Naive thymus-derived CD4-positive, alpha-beta T cell (primary cell): ENCODE measurements at regions of chr11 and their contacts with region 1.

Region 1: DNA sequence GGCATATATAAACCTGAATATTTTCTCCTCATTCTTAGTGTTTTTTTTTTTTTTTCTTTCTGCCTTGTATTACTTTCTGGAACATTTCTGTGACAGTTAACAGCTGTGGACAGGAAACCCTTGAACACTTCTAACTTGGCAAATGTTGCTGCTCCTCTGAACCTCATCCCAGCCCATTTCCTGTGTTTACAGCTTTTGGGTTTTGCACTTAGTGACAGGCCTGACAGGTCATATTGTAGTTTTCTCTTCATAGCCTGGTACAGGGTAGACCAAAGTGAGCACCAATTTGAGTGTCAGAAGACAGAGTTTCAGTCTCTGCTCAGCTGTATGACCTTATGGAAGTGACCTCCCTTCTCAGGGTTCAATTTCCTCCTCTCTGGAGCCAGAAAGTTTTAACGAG is 91.6 kb downstream of the STIM1 start:
- DNase-seq: peak in 8 of 9 donors; percentile 36 to 86 (median 80)
- ATAC-seq: peak; percentile 88
- H3K4me3 ChIP-seq: peak overlapping the region; percentile 44
- H3K4me3 Mint-ChIP-seq: peak overlapping the region; percentile 52 to 88 (median 80)
- H3K27ac ChIP-seq: peak overlapping the region; percentile 65
- H3K27ac Mint-ChIP-seq: peak overlapping the region; percentile 93 to 99 (median 97)
- H3K4me1 ChIP-seq: peaks cover 93 to 95% of the 10 kb centered on the region in 2 donors
- H3K4me1 Mint-ChIP-seq: peaks cover 84 to 98% (median 97%) of the 10 kb centered on the region in 7 donors
- H3K27me3 ChIP-seq: no peaks in the 10 kb centered on the region
- H3K27me3 Mint-ChIP-seq: no peaks in the 10 kb centered on the region

Region 2: DNA sequence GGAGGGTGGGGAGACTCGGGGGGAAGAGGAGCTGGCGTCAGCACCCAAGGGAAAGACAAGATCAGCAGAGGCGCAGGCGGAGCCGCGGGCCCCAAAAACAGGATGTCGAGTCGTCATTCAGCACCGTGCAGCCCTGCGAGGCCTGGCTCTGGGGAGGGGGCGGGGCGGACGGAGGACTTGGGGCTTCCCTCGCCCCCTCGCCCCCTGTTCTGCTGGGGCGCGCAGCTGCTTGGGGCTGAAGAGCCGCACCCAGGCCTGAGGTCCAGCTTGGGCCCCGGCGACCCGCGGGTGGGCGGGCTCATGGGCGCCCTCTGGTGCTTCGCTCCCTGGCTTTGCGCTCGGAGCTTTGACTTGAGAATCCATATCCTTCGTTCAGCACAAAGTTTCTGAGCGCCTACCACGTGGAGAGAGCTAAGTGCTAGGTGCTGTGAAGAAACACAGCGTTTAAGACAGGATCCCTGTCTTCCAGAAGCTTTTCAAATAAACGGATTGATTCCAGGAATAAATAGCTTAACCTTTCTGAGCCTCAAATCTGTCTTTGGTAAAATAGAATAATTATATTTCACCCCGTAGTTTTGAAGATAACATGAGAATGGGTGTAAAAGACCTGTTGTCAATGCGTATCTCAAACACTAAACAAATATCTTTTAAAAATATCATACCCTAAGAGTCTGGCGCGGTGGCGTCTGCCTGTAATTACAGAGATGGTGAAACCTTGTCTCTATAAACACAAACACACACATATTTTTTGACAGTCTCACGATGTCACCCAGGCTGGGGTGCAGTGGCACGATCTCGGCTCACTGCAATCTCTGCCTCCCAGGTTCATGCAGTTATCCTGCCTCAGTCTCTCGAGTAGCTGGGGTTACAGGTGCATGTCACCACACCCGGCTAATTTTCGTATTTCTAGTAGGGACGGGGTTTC is 105.4 kb before region 1 on chr11:
- CTCF ChIA-PET with region 1: no interaction called
- POLR2A ChIA-PET with region 1: interaction called, 18 read pairs
- intact Hi-C with region 1: no loop called
- DNase-seq: peak; percentile 82 to 98 (median 95)
- ATAC-seq: peak; percentile 84
- H3K4me3 ChIP-seq: peak overlapping the region; percentile 51
- H3K4me3 Mint-ChIP-seq: peak overlapping the region; percentile 76 to 99 (median 91)
- H3K27ac ChIP-seq: peak overlapping the region; percentile 95
- H3K27ac Mint-ChIP-seq: peak overlapping the region; percentile 87 to 99 (median 97)
- H3K4me1 ChIP-seq: peaks cover 30 to 34% of the 10 kb centered on the region in 2 donors
- H3K4me1 Mint-ChIP-seq: peaks cover 19 to 64% (median 54%) of the 10 kb centered on the region in 7 donors
- H3K27me3 ChIP-seq: no peaks in the 10 kb centered on the region
- H3K27me3 Mint-ChIP-seq: no peaks in the 10 kb centered on the region

Region 3: DNA sequence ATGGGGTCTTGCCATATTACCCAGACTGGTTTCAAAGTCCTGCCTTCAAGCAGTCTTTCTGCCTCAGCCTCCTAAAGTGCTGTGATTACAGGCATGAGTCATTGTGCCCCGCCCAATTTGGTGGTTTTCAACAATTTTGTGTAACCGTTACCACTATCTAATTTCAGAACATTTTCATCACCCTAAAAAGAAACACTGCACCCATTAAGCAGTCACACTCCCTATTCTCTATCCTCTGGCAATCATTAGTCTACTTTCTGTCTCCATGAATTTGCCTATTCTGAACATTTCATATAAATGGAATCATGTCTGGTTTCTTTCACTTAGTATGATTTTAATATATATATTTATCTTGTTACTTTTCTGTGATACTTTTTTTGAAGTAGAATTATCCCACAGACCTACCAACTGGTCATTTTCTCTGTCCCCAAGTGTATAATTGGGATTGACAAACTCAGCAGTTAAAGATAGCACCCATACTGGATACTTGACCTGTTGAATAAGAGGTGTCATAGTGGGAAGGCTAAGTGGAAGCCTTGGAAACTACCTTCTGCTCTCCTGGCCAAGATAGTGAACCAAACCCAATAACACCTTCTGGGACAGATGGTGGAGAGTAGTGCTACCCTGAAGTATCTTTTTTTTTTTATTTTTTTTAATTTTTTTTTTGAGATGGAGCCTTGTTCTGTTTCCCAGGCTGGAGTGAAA is 26.8 kb before region 1 on chr11:
- CTCF ChIA-PET with region 1: interaction called, 4 read pairs
- POLR2A ChIA-PET with region 1: interaction called, 6 read pairs
- intact Hi-C with region 1: loop called (anchors 1 to 2 kb)
- DNase-seq: peak in 2 of 9 donors; percentile 48 to 62
- ATAC-seq: peak; percentile 86
- H3K4me3 ChIP-seq: no peak overlapping the region
- H3K4me3 Mint-ChIP-seq: peak overlapping the region in 7 of 10 donors; percentile 12 to 66 (median 44)
- H3K27ac ChIP-seq: no peak overlapping the region
- H3K27ac Mint-ChIP-seq: peak overlapping the region in 5 of 9 donors; percentile 22 to 53 (median 30)
- H3K4me1 ChIP-seq: peaks cover 11 to 35% of the 10 kb centered on the region in 2 donors
- H3K4me1 Mint-ChIP-seq: peaks cover 39 to 70% (median 62%) of the 10 kb centered on the region in 7 donors
- H3K27me3 ChIP-seq: no peaks in the 10 kb centered on the region
- H3K27me3 Mint-ChIP-seq: no peaks in the 10 kb centered on the region

Region 4: GRCh38 chr11:3959015-3959919 is 12.2 kb after region 1 on chr11:
- CTCF ChIA-PET with region 1: interaction called, 3 read pairs
- POLR2A ChIA-PET with region 1: interaction called, 5 read pairs
- intact Hi-C with region 1: loop called (anchors 1 kb)
- DNase-seq: no peak
- ATAC-seq: no peak
- H3K4me3 ChIP-seq: no peak overlapping the region
- H3K4me3 Mint-ChIP-seq: peak overlapping the region in 5 of 10 donors; percentile 7 to 34 (median 26)
- H3K27ac ChIP-seq: no peak overlapping the region
- H3K27ac Mint-ChIP-seq: peak overlapping the region in 4 of 9 donors; percentile 19 to 63 (median 52)
- H3K4me1 ChIP-seq: peaks cover 14 to 35% of the 10 kb centered on the region in 2 donors
- H3K4me1 Mint-ChIP-seq: peaks cover 58 to 93% (median 90%) of the 10 kb centered on the region in 7 donors
- H3K27me3 ChIP-seq: no peaks in the 10 kb centered on the region
- H3K27me3 Mint-ChIP-seq: no peaks in the 10 kb centered on the region

Region 5: DNA sequence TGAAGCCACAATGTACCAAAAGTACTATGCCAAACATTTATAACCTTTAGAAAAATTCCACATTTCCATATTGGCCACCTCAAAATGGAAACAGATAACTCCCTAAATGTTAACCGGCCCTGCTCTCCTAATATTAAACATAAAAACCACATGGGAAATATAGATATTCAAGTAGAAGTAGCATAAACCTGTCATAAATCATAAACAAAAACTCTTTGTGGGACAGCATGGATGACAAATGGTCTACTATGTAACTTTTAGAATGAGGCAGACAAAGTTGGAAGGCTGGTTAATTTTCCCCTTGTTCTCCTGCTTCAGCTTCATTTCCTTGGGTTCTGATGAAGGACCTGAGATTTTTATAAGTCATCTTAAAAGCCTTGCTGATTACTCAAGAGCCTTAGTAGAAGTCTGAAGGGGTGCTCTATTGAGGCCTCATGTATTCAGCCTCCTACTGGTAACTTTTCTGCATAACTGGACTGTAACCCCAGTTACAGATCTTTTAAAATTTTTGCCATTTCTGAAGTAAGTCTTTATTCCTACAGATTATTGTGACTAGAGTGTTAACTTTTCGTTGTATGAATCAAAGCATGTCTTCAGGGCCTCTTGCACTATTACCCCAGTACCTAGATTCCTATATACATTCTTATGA is 24.8 kb after region 1 on chr11:
- CTCF ChIA-PET with region 1: interaction called, 3 read pairs
- POLR2A ChIA-PET with region 1: interaction called, 40 read pairs
- intact Hi-C with region 1: loop called (anchors 1 kb)
- DNase-seq: no peak
- ATAC-seq: peak; percentile 41
- H3K4me3 ChIP-seq: no peak overlapping the region
- H3K4me3 Mint-ChIP-seq: peak overlapping the region in 1 of 10 donors; percentile 5
- H3K27ac ChIP-seq: no peak overlapping the region
- H3K27ac Mint-ChIP-seq: peak overlapping the region in 6 of 9 donors; percentile 39 to 88 (median 53)
- H3K4me1 ChIP-seq: peaks cover 10 to 28% of the 10 kb centered on the region in 2 donors
- H3K4me1 Mint-ChIP-seq: peaks cover 35 to 89% (median 81%) of the 10 kb centered on the region in 7 donors
- H3K27me3 ChIP-seq: no peaks in the 10 kb centered on the region
- H3K27me3 Mint-ChIP-seq: no peaks in the 10 kb centered on the region

Region 6: GRCh38 chr11:4018666-4019065 is 71.6 kb after region 1 on chr11:
- CTCF ChIA-PET with region 1: no interaction called
- POLR2A ChIA-PET with region 1: no interaction called
- intact Hi-C with region 1: no loop called
- DNase-seq: no peak
- ATAC-seq: no peak
- H3K4me3 ChIP-seq: no peak overlapping the region
- H3K4me3 Mint-ChIP-seq: peak overlapping the region in 1 of 10 donors; percentile 11
- H3K27ac ChIP-seq: no peak overlapping the region
- H3K27ac Mint-ChIP-seq: peak overlapping the region in 5 of 9 donors; percentile 3 to 87 (median 66)
- H3K4me1 ChIP-seq: no peaks in the 10 kb centered on the region
- H3K4me1 Mint-ChIP-seq: peaks cover 38 to 79% (median 74%) of the 10 kb centered on the region in 7 donors
- H3K27me3 ChIP-seq: no peaks in the 10 kb centered on the region
- H3K27me3 Mint-ChIP-seq: no peaks in the 10 kb centered on the region

Region 7: DNA sequence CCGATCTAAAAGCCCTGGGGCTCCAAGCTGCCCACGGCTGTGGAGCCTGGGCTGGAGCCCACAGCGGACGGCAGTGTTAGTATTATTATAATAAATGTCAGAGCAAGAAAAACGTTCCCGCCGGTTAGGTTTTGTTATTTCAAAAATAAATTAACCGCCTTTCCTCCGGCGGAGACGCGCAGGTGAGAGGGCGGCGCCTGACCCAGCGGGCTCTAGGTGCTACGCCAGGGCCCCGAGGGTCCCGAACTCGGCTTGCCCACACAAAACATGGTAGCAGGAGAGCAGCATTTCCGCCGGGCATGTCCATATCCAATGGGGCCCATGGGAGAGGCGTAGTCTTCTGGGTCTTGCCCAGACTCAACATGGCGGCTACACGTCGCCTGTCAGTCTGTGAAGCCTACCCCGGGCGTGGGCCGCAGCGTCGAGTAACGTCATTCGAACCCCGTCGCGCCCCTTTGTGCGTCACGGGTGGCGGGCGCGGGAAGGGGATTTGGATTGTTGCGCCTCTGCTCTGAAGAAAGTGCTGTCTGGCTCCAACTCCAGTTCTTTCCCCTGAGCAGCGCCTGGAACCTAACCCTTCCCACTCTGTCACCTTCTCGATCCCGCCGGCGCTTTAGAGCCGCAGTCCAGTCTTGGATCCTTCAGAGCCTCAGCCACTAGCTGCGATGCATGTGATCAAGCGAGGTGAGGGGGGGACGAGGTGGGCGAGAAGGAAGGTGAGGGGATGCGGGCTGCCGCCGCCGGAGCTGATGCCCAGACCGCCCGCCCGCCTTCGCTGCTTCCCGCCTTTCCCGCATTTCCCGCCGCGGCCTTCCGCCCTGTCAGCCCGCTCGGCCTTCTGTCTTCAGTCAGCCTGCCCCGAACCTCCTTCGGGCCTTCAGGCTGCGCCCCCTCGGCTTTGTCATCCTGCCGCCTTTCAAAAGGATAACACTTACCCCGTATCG is 147.6 kb after region 1 on chr11 and contains the start of gene RRM1:
- CTCF ChIA-PET with region 1: no interaction called
- POLR2A ChIA-PET with region 1: interaction called, 3 read pairs
- intact Hi-C with region 1: loop called in 1 of 2 experiments (anchors 5 kb)
- DNase-seq: peak; percentile 88 to 96 (median 94)
- ATAC-seq: peak; percentile 95
- H3K4me3 ChIP-seq: peak within 1 kb of the TSS; percentile 83
- H3K4me3 Mint-ChIP-seq: peak within 1 kb of the TSS; percentile 92 to 99 (median 97)
- H3K27ac ChIP-seq: peak within 1 kb of the TSS; percentile 97
- H3K27ac Mint-ChIP-seq: peak within 1 kb of the TSS; percentile 94 to 99 (median 98)
- H3K4me1 ChIP-seq: peaks cover 46 to 63% of the 10 kb centered on the region in 2 donors
- H3K4me1 Mint-ChIP-seq: peaks cover 63 to 90% (median 84%) of the 10 kb centered on the region in 7 donors
- H3K27me3 ChIP-seq: no peaks in the 10 kb centered on the region
- H3K27me3 Mint-ChIP-seq: no peaks in the 10 kb centered on the region
- total RNA-seq, gene RRM1: 33.6 to 140 (median 40.3) TPM